Heart left ventricle (tissue), 16 donors: ENCODE measurements at regions of chr11 and their contacts with region 1.

Region 1: GRCh38 chr11:75867775-75868374 is 52.9 kb downstream of the UVRAG start:
- DNase-seq: peak in 2 of 5 donors; percentile 17 to 33
- ATAC-seq: peak; percentile 51 to 75 (median 70)
- H3K4me3 ChIP-seq: no peak overlapping the region
- H3K27ac ChIP-seq: no peak overlapping the region
- H3K4me1 ChIP-seq: peaks cover 0 to 36% (median 20%) of the 10 kb centered on the region in 12 donors
- H3K27me3 ChIP-seq: no peaks in the 10 kb centered on the region
- CTCF ChIP-seq: peak; percentile 73 to 89 (median 86)
- POLR2A ChIP-seq: no peak

Region 2: DNA sequence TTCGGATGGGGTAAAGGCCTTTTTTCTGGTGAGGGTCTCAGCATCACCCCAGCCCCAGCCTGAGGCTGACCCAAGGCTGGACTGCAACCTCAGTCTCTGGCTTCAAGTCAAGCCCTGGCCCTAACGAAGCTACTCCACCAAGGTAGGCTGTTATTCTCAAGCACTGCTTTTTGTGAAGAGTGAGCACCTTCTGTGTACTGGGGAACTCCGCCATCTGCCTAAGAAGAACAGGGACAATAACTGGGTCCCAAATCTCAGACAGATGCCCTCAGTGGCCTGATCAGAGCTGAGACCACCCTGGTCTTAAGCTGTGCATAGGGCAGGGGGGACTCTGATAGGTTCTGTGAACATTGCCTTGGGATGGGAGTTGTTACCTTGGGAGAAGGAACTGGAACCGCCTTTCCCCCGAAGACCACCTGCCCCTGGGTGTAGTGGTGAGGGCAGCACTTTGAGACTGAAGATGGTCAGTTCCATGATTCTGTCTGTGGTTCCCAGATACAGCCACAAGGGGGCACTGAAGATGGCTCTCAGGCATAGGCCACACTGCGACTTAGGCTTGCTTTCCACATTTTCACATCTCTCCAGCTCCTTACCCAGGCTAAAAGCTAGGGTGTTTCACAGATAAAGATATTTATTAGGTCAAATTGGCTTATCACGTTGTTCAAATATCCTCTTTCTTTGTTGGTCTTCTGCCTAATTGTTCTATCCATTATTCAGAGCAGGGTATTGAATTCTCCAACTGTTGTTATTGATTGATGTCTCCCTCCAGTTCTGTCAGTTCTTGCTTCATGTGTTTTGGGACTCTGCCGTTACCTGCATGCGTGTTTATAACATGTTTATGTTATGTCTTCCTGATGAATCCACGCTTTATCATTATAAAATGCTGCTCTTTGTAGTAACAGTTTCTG is 64.7 kb before region 1 on chr11:
- intact Hi-C with region 1: loop called (anchors 1 to 5 kb)
- DNase-seq: peak in 4 of 5 donors; percentile 61 to 78 (median 76)
- ATAC-seq: peak; percentile 77 to 90 (median 84)
- H3K4me3 ChIP-seq: no peak overlapping the region
- H3K27ac ChIP-seq: no peak overlapping the region
- H3K4me1 ChIP-seq: peaks cover 0 to 30% (median 0%) of the 10 kb centered on the region in 12 donors
- H3K27me3 ChIP-seq: no peaks in the 10 kb centered on the region
- CTCF ChIP-seq: peak; percentile 87 to 97 (median 92)
- POLR2A ChIP-seq: no peak

Region 3: DNA sequence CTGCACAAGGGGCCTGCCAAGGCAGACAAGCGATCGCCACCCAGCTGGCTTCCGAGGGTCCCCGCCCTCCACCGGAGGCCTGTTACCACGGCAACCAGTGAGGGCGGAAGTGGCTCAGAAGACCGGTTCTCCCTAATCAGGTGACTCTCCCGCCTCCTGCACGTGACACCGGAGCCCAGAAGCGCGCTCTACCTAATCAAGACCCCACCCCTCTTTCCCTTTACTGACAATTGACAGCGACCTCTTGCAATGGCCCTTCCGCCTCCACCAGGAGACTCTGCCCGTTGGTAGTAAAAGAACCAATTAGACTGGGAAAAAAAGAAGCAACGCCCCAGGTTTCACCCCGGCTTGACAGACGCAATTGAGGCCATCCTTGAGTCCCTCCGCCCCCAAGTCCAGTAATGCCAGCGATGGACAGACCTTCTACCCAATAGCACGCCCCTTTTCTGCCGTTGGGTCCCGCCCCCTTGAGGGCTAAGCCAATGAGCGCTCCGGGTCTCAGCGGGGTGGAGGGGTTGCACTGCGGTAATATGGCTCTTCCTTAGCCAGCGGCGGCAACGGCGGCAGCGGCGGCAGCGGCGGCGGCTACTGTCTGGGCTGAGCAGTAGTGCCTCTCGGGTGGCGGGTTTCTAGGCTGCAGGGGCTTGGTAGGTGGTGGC is 53.1 kb before region 1 on chr11 and contains the start of gene UVRAG:
- intact Hi-C with region 1: loop called in 2 of 10 experiments (anchors 5 kb)
- DNase-seq: peak; percentile 98 to 99 (median 98)
- ATAC-seq: peak; percentile 97 to 98 (median 98)
- H3K4me3 ChIP-seq: peak within 1 kb of the TSS; percentile 72 to 100 (median 94)
- H3K27ac ChIP-seq: peak within 1 kb of the TSS; percentile 84 to 96 (median 94)
- H3K4me1 ChIP-seq: peaks cover 0 to 60% (median 22%) of the 10 kb centered on the region in 12 donors
- H3K27me3 ChIP-seq: no peaks in the 10 kb centered on the region
- CTCF ChIP-seq: peak in 3 of 12 donors; percentile 12 to 39 (median 37)
- POLR2A ChIP-seq: peak; percentile 18 to 95
- total RNA-seq, gene UVRAG: 12.7 to 22.6 (median 15.2) TPM